Naive thymus-derived CD4-positive, alpha-beta T cell (primary cell): ENCODE measurements at regions of chr16 and their contacts with region 1.

Region 1: DNA sequence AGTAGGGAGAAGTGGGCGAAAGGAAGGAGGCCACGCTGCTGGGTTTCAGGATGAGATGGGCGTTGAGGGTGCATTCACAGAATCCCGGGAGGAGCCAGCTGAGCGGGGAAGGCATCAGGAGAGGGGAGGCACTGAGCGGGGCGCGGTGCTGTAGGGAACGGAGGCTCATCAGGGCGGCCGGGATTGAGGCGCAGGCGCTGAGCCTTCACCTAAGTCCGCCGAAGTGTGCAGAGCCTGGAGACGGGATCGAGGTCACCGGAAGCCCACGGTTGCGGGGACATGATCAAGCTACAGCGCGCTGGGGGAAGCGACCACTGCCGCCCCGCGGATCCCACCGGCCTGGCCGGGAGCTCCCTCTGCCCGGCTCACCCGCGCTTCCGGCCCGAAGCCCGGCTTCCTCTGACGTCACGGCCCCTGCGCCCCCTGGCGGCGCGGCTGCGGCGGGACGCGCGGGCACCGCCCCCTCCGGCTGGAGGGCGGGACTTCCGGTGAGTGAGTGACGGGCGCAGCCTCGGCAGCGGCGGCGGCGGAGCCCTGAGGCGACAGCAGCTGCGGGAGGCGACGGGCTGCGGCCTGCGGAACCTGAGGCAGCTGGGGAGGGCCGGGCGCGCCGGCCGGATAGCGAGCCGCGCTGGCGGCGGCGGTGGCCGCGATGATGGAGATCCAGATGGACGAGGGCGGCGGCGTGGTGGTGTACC is at the start of gene MAPK8IP3:
- DNase-seq: peak; percentile 85 to 100 (median 98)
- ATAC-seq: peak; percentile 93
- H3K4me3 ChIP-seq: peak within 1 kb of the TSS; percentile 98
- H3K4me3 Mint-ChIP-seq: peak within 1 kb of the TSS; percentile 95 to 100 (median 98)
- H3K27ac ChIP-seq: peak within 1 kb of the TSS; percentile 96
- H3K27ac Mint-ChIP-seq: peak within 1 kb of the TSS; percentile 95 to 99 (median 97)
- H3K4me1 ChIP-seq: peaks cover 18 to 25% of the 10 kb centered on the region in 2 donors
- H3K4me1 Mint-ChIP-seq: peaks cover 0 to 48% (median 32%) of the 10 kb centered on the region in 7 donors
- H3K27me3 ChIP-seq: no peaks in the 10 kb centered on the region
- H3K27me3 Mint-ChIP-seq: no peaks in the 10 kb centered on the region
- total RNA-seq, gene MAPK8IP3: 112 to 299 (median 272) TPM

Region 2: DNA sequence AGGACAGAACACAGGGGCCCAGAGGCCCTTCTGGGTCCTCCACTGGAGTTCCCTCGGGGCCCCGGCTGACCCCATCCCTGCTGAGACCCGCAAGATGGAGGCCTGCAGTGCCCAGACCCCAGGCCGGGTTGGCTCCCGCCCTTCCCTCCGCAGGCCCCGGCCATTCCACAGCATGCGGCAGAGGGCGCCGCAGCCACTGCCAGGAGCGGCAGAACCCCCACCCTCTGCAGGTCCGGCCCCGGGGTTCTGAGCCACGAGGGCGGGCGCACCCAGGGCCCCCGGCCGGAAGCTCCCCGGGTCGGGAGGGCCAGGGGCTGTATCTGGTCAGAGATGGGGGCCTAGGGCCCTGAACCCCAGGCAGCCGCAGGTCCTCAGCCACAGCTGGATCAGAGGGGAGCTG is 277.3 kb before region 1 on chr16:
- CTCF ChIA-PET with region 1: no interaction called
- POLR2A ChIA-PET with region 1: interaction called, 5 read pairs
- intact Hi-C with region 1: loop called in 1 of 2 experiments (anchors 10 kb)
- DNase-seq: peak in 6 of 9 donors; percentile 23 to 63 (median 38)
- ATAC-seq: peak; percentile 73
- H3K4me3 ChIP-seq: no peak overlapping the region
- H3K4me3 Mint-ChIP-seq: peak overlapping the region in 1 of 10 donors; percentile 53
- H3K27ac ChIP-seq: no peak overlapping the region
- H3K27ac Mint-ChIP-seq: no peak overlapping the region
- H3K4me1 ChIP-seq: no peaks in the 10 kb centered on the region
- H3K4me1 Mint-ChIP-seq: peaks cover 0 to 3% (median 0%) of the 10 kb centered on the region in 7 donors
- H3K27me3 ChIP-seq: no peaks in the 10 kb centered on the region
- H3K27me3 Mint-ChIP-seq: peaks cover 0 to 2% (median 0%) of the 10 kb centered on the region in 5 donors

Region 3: GRCh38 chr16:1527836-1528811 is 177.7 kb before region 1 on chr16:
- CTCF ChIA-PET with region 1: interaction called, 3 read pairs
- POLR2A ChIA-PET with region 1: interaction called, 10 read pairs
- intact Hi-C with region 1: loop called in 1 of 2 experiments (anchors 2 kb)
- DNase-seq: no peak
- ATAC-seq: no peak
- H3K4me3 ChIP-seq: no peak overlapping the region
- H3K4me3 Mint-ChIP-seq: peak overlapping the region; percentile 54 to 85 (median 79)
- H3K27ac ChIP-seq: peak overlapping the region; percentile 71
- H3K27ac Mint-ChIP-seq: peak overlapping the region; percentile 38 to 92 (median 87)
- H3K4me1 ChIP-seq: peaks cover 14 to 44% of the 10 kb centered on the region in 2 donors
- H3K4me1 Mint-ChIP-seq: peaks cover 17 to 57% (median 33%) of the 10 kb centered on the region in 7 donors
- H3K27me3 ChIP-seq: no peaks in the 10 kb centered on the region
- H3K27me3 Mint-ChIP-seq: no peaks in the 10 kb centered on the region

Region 4: DNA sequence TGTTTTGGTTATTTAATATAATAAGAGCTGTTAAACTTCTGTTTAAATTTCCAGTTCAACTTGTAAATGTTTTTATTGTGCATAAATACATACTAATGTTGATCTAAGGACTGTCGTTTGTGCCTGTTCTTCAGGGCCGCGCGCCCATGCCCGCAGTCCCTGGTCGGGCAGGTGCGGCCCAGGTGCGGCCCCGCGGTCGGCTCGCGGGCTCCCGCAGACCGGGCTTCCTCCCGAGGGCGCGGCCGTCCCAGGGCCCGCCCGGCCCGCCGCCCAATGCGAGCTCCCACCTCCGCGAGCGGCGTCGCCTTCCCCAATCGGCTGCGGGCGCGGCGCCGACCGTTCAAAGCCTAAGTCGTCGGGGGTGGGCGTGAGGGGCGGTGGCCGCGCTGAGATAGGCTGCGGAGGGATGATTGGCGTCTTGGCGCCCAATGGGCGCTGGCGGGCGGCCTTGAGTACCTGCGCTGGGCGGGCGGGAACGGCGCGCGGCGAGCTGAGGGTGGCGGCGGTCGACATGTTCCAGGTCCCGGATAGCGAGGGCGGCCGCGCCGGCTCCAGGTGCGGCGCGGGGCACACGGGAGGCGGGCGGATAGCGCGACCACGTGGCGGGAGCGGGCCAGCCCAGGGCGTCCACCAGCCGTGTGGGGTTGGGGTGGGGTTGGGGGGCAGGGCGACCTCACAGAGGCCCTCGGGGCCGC is 27.9 kb before region 1 on chr16 and contains the start of gene JPT2:
- CTCF ChIA-PET with region 1: interaction called, 11 read pairs
- POLR2A ChIA-PET with region 1: interaction called, 27 read pairs
- intact Hi-C with region 1: loop called (anchors 1 kb)
- DNase-seq: peak; percentile 89 to 97 (median 94)
- ATAC-seq: peak; percentile 98
- H3K4me3 ChIP-seq: peak within 1 kb of the TSS; percentile 59
- H3K4me3 Mint-ChIP-seq: peak within 1 kb of the TSS; percentile 81 to 90 (median 88)
- H3K27ac ChIP-seq: peak within 1 kb of the TSS; percentile 78
- H3K27ac Mint-ChIP-seq: peak within 1 kb of the TSS; percentile 64 to 91 (median 78)
- H3K4me1 ChIP-seq: no peaks in the 10 kb centered on the region
- H3K4me1 Mint-ChIP-seq: peaks cover 24 to 42% (median 36%) of the 10 kb centered on the region in 7 donors
- H3K27me3 ChIP-seq: no peaks in the 10 kb centered on the region
- H3K27me3 Mint-ChIP-seq: no peaks in the 10 kb centered on the region
- total RNA-seq, gene JPT2: 12.6 to 67.2 (median 36.4) TPM

Region 5: GRCh38 chr16:1772736-1773584 is 67.1 kb after region 1 on chr16 and contains the starts of genes EME2 and MRPS34:
- CTCF ChIA-PET with region 1: no interaction called
- POLR2A ChIA-PET with region 1: interaction called, 14 read pairs
- intact Hi-C with region 1: loop called (anchors 2 kb)
- DNase-seq: peak; percentile 61 to 88 (median 73)
- ATAC-seq: peak; percentile 76
- H3K4me3 ChIP-seq: peak within 1 kb of the TSS; percentile 70
- H3K4me3 Mint-ChIP-seq: peak within 1 kb of the TSS; percentile 91 to 99 (median 98)
- H3K27ac ChIP-seq: peak within 1 kb of the TSS; percentile 85
- H3K27ac Mint-ChIP-seq: peak within 1 kb of the TSS; percentile 86 to 98 (median 95)
- H3K4me1 ChIP-seq: peaks cover 13 to 26% of the 10 kb centered on the region in 2 donors
- H3K4me1 Mint-ChIP-seq: peaks cover 8 to 23% (median 12%) of the 10 kb centered on the region in 7 donors
- H3K27me3 ChIP-seq: no peaks in the 10 kb centered on the region
- H3K27me3 Mint-ChIP-seq: peaks cover 0 to 2% (median 0%) of the 10 kb centered on the region in 5 donors
- total RNA-seq, gene EME2: 32.2 to 47.5 (median 36.8) TPM
- total RNA-seq, gene MRPS34: 41.6 to 115 (median 49.5) TPM

Region 6: GRCh38 chr16:1800701-1801100 is 94.9 kb after region 1 on chr16:
- CTCF ChIA-PET with region 1: no interaction called
- POLR2A ChIA-PET with region 1: no interaction called
- intact Hi-C with region 1: no loop called
- DNase-seq: no peak
- ATAC-seq: no peak
- H3K4me3 ChIP-seq: no peak overlapping the region
- H3K4me3 Mint-ChIP-seq: no peak overlapping the region
- H3K27ac ChIP-seq: no peak overlapping the region
- H3K27ac Mint-ChIP-seq: no peak overlapping the region
- H3K4me1 ChIP-seq: no peaks in the 10 kb centered on the region
- H3K4me1 Mint-ChIP-seq: peaks cover 0 to 3% (median 0%) of the 10 kb centered on the region in 7 donors
- H3K27me3 ChIP-seq: no peaks in the 10 kb centered on the region
- H3K27me3 Mint-ChIP-seq: no peaks in the 10 kb centered on the region

Region 7: GRCh38 chr16:1826691-1827575 is 121.1 kb after region 1 on chr16 and contains the starts of genes FAHD1 and HAGH:
- CTCF ChIA-PET with region 1: interaction called, 3 read pairs
- POLR2A ChIA-PET with region 1: interaction called, 4 read pairs
- intact Hi-C with region 1: loop called in 1 of 2 experiments (anchors 5 kb)
- DNase-seq: peak; percentile 83 to 98 (median 92)
- ATAC-seq: peak; percentile 91
- H3K4me3 ChIP-seq: peak within 1 kb of the TSS; percentile 99
- H3K4me3 Mint-ChIP-seq: peak within 1 kb of the TSS; percentile 82 to 98 (median 93)
- H3K27ac ChIP-seq: peak within 1 kb of the TSS; percentile 78
- H3K27ac Mint-ChIP-seq: peak within 1 kb of the TSS; percentile 85 to 94 (median 91)
- H3K4me1 ChIP-seq: peaks cover 19 to 26% of the 10 kb centered on the region in 2 donors
- H3K4me1 Mint-ChIP-seq: peaks cover 21 to 62% (median 44%) of the 10 kb centered on the region in 7 donors
- H3K27me3 ChIP-seq: no peaks in the 10 kb centered on the region
- H3K27me3 Mint-ChIP-seq: no peaks in the 10 kb centered on the region
- total RNA-seq, gene FAHD1: 7.8 to 12.9 (median 9.7) TPM
- total RNA-seq, gene HAGH: 46.2 to 72.9 (median 48.9) TPM